Activated T-helper 1 cell treated with anti-CD3 and anti-CD28 coated beads, Interleukin-12 subunit alpha, Interleukin-12 subunit beta, Interleukin-2, Interleukin-4 antibody, amounts not matched to agents 30 ng/mL and 10 ng/mL and 1 ng/mL, durations not matched to agents 14 hours and 24 hours and 36 hours (primary cell): ENCODE measurements at regions of chr15 and their contacts with region 1.

Region 1: DNA sequence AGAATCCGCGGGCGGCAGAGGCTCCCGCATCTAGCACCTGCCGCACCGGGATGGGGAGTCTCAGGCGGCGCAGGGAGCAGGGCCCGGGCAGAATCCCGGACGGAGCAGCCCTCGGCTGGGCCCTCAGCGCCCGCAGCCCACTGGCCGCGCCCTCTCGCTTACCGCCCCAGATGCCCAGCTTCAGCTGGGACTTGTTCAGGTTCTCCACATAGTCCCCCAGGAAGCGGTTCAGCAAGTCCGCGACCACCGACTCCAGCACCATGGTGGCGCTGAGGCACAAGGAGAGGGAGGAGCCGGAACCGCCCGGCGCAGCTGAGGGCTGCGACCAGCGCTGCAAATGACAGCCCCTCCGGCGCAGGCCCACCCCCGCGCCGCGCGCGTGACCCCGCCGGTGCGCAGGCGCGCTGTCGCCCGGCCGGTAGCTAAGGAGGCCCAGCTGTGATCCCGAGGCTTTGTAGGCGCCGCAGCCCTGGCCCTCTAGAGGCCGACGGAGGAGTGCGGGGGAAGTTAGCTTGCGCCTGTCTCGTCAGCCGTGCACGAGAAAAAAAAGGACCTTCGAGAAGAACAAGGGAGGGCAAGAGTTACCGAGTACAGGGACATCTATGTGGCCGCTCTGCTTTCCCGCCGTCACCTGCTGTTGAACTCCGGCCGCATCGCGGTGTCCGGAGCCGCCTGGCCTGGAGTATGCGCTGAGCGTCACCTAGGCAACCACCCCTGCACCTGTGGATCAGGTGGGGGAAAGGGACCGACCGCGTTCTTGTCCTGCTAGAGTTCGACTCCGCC is at the start of gene VPS13C:
- DNase-seq: peak; percentile 93
- H3K4me3 Mint-ChIP-seq: peak within 1 kb of the TSS; percentile 98
- H3K27ac Mint-ChIP-seq: peak within 1 kb of the TSS; percentile 100
- H3K4me1 Mint-ChIP-seq: peaks cover 47% of the 10 kb centered on the region
- H3K27me3 Mint-ChIP-seq: peaks cover 10% of the 10 kb centered on the region
- total RNA-seq, gene VPS13C: 50.4 and 52.7 TPM in 2 replicates

Region 2: GRCh38 chr15:61889706-61890105 is 170.6 kb before region 1 on chr15:
- intact Hi-C with region 1: loop called (anchors 5 kb)
- DNase-seq: no peak
- H3K4me3 Mint-ChIP-seq: no peak overlapping the region
- H3K27ac Mint-ChIP-seq: peak overlapping the region; percentile 86
- H3K4me1 Mint-ChIP-seq: peaks cover 13% of the 10 kb centered on the region
- H3K27me3 Mint-ChIP-seq: no peaks in the 10 kb centered on the region

Region 3: GRCh38 chr15:62046078-62046743 is 14.1 kb before region 1 on chr15:
- intact Hi-C with region 1: loop called (anchors 1 kb)
- DNase-seq: no peak
- H3K4me3 Mint-ChIP-seq: peak overlapping the region; percentile 52
- H3K27ac Mint-ChIP-seq: peak overlapping the region; percentile 59
- H3K4me1 Mint-ChIP-seq: peaks cover 21% of the 10 kb centered on the region
- H3K27me3 Mint-ChIP-seq: no peaks in the 10 kb centered on the region

Region 4: DNA sequence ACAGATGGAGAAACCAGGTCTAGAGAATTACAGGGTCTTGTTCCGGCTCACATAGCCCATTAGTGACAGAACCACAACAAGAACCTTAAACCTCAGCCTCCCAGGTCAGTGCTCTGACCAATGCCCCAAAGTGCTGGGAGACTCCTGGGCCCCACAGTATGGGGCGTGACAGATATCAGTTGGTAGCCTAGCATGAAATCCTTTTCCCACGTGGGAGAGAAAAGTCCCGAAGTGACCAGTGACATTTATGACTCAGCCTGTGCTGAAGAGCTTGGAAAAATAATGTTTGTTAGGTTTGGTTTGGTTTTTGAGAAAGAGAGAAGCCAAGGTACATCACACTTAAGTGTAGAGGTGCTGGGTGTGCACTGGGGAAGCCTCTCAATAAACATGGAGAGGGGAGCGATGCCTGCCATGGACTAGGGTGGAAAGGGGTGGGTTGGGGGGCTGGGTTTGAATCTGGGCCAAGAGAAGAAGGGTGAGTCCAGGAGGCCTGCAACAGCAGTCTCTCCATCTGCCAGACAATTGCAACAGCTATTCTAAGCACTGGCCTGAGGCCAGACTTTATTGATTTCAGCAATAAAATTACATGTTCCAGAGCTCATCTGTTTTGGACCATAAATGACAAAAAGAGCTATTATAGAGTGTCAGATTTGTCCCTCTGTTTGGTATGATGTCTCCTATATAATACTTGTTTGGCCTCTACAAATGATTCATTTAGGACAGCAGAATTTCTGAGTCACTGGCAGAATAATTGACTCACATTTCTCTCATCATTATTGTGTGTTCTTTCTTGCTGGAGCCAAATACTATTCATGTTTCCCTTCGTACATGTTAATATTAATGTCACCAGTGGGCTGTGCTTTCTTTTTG is 49.9 kb after region 1 on chr15:
- intact Hi-C with region 1: no loop called
- DNase-seq: no peak
- H3K4me3 Mint-ChIP-seq: no peak overlapping the region
- H3K27ac Mint-ChIP-seq: peak overlapping the region; percentile 71
- H3K4me1 Mint-ChIP-seq: peaks cover 13% of the 10 kb centered on the region
- H3K27me3 Mint-ChIP-seq: no peaks in the 10 kb centered on the region